ENCODE measurements at regions of chr19 and their contacts with region 1.

Region 1: DNA sequence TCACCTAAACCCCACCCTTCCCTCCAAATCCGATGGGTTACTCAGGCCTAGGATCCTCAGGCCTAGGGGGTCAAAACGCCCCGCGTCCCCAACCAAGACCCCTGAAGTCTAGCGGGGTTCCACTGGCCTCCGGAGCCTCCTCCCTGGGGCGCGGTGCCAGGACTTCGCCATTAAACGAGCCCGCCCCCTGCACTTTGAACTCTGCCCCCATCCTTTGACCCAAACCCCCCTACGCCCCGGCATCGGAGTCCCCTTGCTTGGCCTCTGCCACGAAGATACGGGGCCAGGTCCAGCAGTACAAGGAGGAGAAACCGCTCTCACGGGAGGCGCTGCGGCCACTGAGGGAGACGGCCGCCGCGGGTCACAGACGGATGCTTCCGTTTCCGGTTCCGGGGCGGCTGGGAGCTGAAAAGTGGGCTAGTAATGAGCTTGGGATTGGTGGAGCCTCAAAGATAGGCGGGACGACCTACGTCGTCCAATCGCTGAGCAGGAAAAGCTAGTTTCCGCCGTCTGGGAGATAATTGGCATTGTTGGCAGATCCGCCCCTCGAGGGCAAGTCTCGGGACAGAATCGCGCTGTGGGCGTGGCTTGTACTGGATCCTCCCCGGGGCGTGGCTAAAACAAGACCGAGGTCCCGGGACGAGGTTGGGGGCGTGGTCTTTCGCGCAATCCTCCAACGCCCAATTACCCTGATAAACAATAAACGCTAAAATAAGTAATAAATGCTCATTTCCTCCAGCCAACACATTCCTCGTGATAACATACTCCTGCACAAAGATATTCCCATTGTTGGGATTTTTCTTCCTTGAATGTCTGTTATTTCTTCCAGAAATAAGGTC is 5.7 kb upstream of the ZNF77 start:
- DNase-seq: peak; percentile 100
- H3K4me3 ChIP-seq: peak overlapping the region; percentile 70 to 93 (median 84)
- H3K27ac ChIP-seq: peak overlapping the region; percentile 87 to 97
- H3K4me1 ChIP-seq: peaks cover 9 to 22% (median 11%) of the 10 kb centered on the region in 4 experiments
- H3K27me3 ChIP-seq: no peaks in the 10 kb centered on the region

Region 2: GRCh38 chr19:2887391-2887914 is 63.1 kb before region 1 on chr19:
- CTCF ChIA-PET with region 1: interaction called, 14 read pairs
- POLR2A ChIA-PET with region 1: interaction called, 13 read pairs
- DNase-seq: peak; percentile 72 to 84 (median 82)
- H3K4me3 ChIP-seq: peak overlapping the region in 1 of 7 experiments; percentile 7
- H3K27ac ChIP-seq: no peak overlapping the region
- H3K4me1 ChIP-seq: peaks cover 0 to 29% (median 4%) of the 10 kb centered on the region in 4 experiments
- H3K27me3 ChIP-seq: no peaks in the 10 kb centered on the region

Region 3: GRCh38 chr19:2933490-2933910 is 17.0 kb before region 1 on chr19:
- CTCF ChIA-PET with region 1: no interaction called
- POLR2A ChIA-PET with region 1: no interaction called
- DNase-seq: no peak
- H3K4me3 ChIP-seq: peak overlapping the region in 1 of 7 experiments; percentile 13
- H3K27ac ChIP-seq: no peak overlapping the region
- H3K4me1 ChIP-seq: no peaks in the 10 kb centered on the region
- H3K27me3 ChIP-seq: no peaks in the 10 kb centered on the region

Region 4: DNA sequence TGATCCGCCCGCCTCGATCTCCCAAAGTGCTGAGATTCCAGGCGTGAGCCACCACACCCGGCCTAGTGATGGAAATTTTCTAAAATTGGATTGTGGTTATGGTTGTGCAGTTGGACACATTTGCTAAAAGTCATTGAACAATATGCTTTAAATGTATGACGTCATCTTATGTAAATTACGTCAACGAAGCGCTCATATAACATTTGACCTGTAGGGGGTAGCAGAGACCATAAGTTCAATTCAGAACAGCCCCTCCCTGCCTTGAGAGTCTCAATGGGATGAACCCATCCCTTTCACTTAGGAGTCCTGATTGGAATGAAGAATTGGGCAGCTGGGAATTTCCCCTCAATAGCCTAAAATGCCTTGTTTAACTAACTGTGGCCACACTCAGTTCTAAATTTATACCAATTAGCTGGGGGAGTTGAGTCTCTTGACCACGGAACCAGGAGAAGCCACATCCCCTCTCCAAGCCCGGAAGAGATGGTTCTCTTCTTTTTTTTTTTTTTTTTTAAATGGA is 11.6 kb after region 1 on chr19:
- CTCF ChIA-PET with region 1: interaction called, 31 read pairs
- POLR2A ChIA-PET with region 1: no interaction called
- DNase-seq: peak; percentile 86 to 91 (median 87)
- H3K4me3 ChIP-seq: peak overlapping the region in 2 of 7 experiments; percentile 58 to 74
- H3K27ac ChIP-seq: no peak overlapping the region
- H3K4me1 ChIP-seq: peaks cover 0 to 3% (median 0%) of the 10 kb centered on the region in 4 experiments
- H3K27me3 ChIP-seq: no peaks in the 10 kb centered on the region

Measured in common myeloid progenitor, CD34-positive (primary cell).